ENCODE measurements at regions of chr6 and their contacts with region 1.

Region 1: DNA sequence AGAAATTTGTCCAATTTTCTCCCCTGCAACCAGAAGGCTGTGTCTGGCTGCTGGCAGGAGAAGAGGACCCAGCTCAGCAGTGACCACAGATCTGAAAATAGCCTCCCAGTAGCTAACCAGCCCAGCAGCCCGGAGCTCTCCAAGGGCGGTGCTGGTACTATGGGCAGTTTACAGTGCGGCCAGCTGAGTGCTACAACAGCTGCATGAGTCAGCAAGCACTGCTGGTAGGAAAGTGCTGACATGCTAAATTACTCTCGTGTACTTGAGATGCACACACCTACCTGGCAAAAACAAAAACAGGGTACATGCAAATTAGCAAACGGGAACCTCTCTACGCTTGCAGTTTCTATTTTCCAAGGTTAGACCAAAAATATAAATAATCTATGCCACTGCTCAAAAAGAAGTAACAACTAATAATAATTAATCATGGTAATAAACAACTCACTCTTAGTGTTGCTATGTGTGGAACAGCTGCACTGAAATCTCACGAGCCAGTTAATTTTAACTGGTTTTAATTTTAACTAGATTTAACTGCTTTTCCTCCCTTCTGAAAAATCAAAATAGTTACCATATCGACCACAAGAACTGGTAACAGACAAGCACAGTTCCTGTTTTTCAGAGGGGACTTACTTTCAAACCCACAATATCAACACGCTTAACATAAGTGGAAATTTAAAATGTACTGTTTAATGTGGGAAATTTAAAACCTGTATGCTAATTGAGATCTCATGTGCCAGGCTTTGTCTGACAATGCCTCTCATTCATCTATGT is 10.8 kb downstream of the BACH2 start:
- DNase-seq: peak; percentile 73
- ATAC-seq: peak; percentile 60
- H3K4me3 Mint-ChIP-seq: peak overlapping the region; percentile 75
- H3K27ac Mint-ChIP-seq: peak overlapping the region; percentile 78
- H3K4me1 Mint-ChIP-seq: peaks cover 89% of the 10 kb centered on the region
- H3K27me3 Mint-ChIP-seq: no peaks in the 10 kb centered on the region

Region 2: DNA sequence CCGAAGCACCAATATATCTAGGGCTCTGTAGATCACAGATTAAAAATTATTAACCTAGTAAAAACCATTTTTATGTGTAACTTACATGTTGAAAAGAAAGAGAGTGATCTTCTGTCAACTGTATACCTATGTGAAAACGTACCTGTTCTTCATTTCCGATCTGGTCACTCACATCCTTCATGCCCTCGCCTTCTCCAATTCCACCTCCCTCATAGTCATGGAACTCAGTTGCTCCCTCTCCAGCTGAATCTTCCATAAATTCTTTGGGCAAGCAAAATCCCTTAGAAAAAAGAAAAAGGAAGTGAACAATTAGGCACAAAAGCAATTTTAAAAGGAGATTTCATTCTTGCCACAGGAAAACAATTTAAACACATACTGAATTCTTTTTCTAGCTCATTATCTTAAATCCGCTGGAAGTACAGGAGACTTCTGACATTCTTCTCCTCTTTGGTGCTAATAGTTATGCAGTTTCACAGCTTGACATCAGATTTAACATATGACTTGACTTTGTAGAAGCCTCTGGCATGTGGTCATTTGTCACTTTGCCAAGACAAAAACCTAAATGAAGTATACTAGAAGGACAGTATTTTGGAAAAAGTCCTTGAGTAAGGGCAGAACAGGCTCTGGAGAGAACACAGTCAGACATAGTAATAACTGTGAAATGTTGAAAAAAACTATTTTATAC is 617.8 kb before region 1 on chr6:
- CTCF ChIA-PET with region 1: no interaction called
- POLR2A ChIA-PET with region 1: no interaction called
- DNase-seq: no peak
- ATAC-seq: no peak
- H3K4me3 Mint-ChIP-seq: no peak overlapping the region
- H3K27ac Mint-ChIP-seq: no peak overlapping the region
- H3K4me1 Mint-ChIP-seq: no peaks in the 10 kb centered on the region
- H3K27me3 Mint-ChIP-seq: no peaks in the 10 kb centered on the region

Region 3: DNA sequence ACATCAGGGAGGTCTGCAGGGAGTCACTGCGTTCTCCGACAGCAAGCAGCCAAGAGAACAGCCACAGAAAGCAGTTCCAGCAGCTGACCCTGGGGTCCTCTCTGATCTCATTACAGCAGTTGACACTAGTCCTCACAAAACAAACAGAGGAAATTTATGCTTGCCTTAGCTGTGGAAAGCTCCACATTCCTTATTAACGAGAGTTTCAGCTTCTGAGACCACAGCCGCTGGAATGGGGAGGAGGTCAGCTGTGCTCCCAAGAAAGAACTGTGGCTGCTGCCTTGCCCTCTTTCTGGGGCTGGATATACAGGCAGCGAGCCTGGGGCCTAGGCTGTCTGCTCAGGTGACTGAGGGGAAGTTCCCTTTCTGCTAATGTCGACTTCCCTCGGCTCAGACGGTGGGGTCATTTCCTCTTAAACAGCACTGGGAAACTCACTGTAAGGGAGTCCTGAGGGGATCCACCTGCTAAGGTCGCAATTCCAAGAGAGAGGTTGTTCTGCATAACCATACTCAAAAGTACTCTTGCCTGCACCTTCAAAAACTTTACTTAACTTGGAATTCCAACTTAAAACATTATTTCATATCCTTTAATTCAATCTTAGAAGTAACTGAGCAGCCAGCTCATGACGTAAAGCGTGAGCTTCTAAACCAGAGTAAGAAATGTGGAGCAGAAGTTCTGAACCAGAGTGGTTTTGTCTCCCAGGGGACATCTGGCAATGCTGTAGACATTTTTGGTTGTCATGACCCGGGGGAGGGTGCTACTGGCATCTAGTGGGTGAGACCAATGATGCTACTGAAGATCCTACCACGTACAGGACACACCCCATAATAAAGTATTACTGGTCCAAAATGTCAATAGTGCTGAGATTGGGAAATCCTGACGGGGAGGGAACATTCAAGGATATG is 69.5 kb before region 1 on chr6:
- CTCF ChIA-PET with region 1: interaction called, 8 read pairs
- POLR2A ChIA-PET with region 1: interaction called, 19 read pairs
- DNase-seq: peak; percentile 59
- ATAC-seq: peak; percentile 25
- H3K4me3 Mint-ChIP-seq: peak overlapping the region; percentile 57
- H3K27ac Mint-ChIP-seq: no peak overlapping the region
- H3K4me1 Mint-ChIP-seq: peaks cover 25% of the 10 kb centered on the region
- H3K27me3 Mint-ChIP-seq: no peaks in the 10 kb centered on the region

Region 4: GRCh38 chr6:90263633-90264032 is 22.2 kb before region 1 on chr6:
- CTCF ChIA-PET with region 1: interaction called, 7 read pairs
- POLR2A ChIA-PET with region 1: interaction called, 14 read pairs
- DNase-seq: no peak
- ATAC-seq: peak; percentile 25
- H3K4me3 Mint-ChIP-seq: no peak overlapping the region
- H3K27ac Mint-ChIP-seq: peak overlapping the region; percentile 39
- H3K4me1 Mint-ChIP-seq: peaks cover 96% of the 10 kb centered on the region
- H3K27me3 Mint-ChIP-seq: no peaks in the 10 kb centered on the region

Region 5: DNA sequence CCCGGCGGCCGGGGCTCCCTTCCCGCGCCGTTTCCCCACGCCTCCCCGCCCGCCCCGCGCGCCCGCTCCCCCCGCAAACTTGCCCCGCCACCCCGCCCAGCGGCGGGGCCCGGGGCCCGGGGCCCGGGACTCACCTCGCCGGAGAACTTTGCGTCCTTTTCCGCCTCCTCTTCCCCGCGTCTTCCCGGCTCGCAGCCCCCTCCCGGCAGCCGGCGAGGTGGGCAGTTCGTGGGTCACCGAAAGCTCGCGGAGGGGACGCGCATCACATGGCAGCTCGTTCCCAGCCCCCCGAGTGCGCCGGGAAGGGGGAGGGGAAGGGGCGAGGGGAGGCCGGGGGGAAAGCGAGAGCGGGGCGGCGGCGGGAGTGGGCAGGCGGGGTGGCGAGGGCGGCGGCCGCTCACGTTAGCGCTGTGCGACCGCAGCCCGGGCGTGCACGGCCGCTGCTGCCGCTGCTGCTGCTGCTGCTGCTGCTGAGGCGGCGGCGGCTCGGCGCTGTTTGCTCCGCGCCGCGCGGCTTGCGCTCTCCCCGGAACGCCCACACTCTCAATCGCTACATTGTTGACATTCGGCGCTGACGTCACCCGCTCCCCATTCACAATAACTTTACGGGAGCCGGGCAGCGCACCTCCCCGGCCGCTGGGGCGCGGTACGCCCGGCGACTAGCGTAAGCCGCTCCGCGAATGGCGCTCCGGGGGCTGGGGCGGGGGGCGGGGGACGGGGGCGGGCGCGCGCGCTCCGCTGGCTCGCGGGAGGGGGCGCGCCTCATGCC is 10.7 kb after region 1 on chr6 and contains the start of gene BACH2:
- CTCF ChIA-PET with region 1: interaction called, 15 read pairs
- POLR2A ChIA-PET with region 1: interaction called, 17 read pairs
- DNase-seq: peak; percentile 96
- ATAC-seq: peak; percentile 74
- H3K4me3 Mint-ChIP-seq: peak within 1 kb of the TSS; percentile 81
- H3K27ac Mint-ChIP-seq: peak within 1 kb of the TSS; percentile 84
- H3K4me1 Mint-ChIP-seq: peaks cover 32% of the 10 kb centered on the region
- H3K27me3 Mint-ChIP-seq: peaks cover 17% of the 10 kb centered on the region
- total RNA-seq, gene BACH2: 61.3 to 70.9 TPM

Region 6: DNA sequence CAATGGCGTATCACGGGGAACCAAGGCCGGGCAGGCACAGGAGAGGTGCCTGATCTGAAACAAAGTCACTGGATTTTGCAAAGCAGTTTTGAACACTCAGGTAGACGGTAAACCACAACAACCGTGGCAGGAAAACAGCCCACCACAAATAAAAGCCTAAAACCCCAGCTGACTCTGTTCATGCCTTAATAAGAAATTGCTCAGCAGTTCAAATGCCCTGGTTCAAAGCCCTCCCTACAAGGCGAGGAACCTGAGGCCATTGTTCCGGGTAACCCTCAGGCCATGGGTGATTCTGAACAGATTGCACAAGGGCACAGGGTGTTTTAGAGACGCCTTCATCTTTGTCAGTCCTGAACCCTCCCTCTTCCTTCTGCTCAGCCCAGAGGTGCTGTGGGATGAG is 186.9 kb after region 1 on chr6:
- CTCF ChIA-PET with region 1: interaction called, 253 read pairs
- POLR2A ChIA-PET with region 1: interaction called, 30 read pairs
- DNase-seq: peak; percentile 76
- ATAC-seq: peak; percentile 49
- H3K4me3 Mint-ChIP-seq: peak overlapping the region; percentile 24
- H3K27ac Mint-ChIP-seq: peak overlapping the region; percentile 62
- H3K4me1 Mint-ChIP-seq: peaks cover 91% of the 10 kb centered on the region
- H3K27me3 Mint-ChIP-seq: peaks cover 3% of the 10 kb centered on the region

Measured in activated CD8-positive, alpha-beta T cell treated with anti-CD3 and anti-CD28 coated beads, Interleukin-2, amount 10 ng/mL, durations not matched to agents 7 days and 5 days (primary cell).